ENCODE measurements at regions of chr5 and their contacts with region 1.

Region 1: DNA sequence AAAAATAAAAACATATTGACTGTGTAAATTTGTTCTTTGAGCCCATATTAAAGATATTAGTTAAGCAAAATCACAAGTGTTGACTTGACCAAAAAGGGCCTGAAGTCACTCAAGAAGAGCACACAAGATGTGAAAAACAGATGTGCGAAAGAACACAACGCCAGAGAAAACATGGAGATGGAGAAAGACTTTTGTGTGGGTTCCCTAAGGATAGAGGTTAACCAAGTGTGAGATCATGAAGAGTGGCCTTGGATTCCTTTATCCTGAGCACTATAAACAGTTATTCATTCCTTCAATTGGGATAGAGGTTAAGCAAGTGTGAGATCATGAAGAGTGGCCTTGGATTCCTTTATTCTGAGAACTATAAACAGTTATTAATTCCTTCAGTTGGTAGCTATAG is 361.8 kb downstream of the CDH18 start:
- DNase-seq: no peak
- ATAC-seq: no peak
- H3K4me3 ChIP-seq: no peak overlapping the region
- H3K27ac ChIP-seq: no peak overlapping the region
- H3K4me1 ChIP-seq: no peaks in the 10 kb centered on the region
- H3K27me3 ChIP-seq: no peaks in the 10 kb centered on the region
- CTCF ChIP-seq: no peak
- EP300 ChIP-seq: no peak
- POLR2A ChIP-seq: no peak
- RAD21 ChIP-seq: no peak

Region 2: GRCh38 chr5:19655627-19656026 is 29.4 kb after region 1 on chr5:
- CTCF ChIA-PET with region 1: no interaction called
- POLR2A ChIA-PET with region 1: interaction called, 13 read pairs
- RAD21 ChIA-PET with region 1: no interaction called
- SMC1A ChIA-PET with region 1: no interaction called
- in situ Hi-C with region 1: no loop called
- intact Hi-C with region 1: no loop called
- DNase-seq: no peak
- ATAC-seq: no peak
- H3K4me3 ChIP-seq: no peak overlapping the region
- H3K27ac ChIP-seq: no peak overlapping the region
- H3K4me1 ChIP-seq: no peaks in the 10 kb centered on the region
- H3K27me3 ChIP-seq: no peaks in the 10 kb centered on the region
- CTCF ChIP-seq: no peak
- EP300 ChIP-seq: no peak
- POLR2A ChIP-seq: no peak
- RAD21 ChIP-seq: no peak

Region 3: DNA sequence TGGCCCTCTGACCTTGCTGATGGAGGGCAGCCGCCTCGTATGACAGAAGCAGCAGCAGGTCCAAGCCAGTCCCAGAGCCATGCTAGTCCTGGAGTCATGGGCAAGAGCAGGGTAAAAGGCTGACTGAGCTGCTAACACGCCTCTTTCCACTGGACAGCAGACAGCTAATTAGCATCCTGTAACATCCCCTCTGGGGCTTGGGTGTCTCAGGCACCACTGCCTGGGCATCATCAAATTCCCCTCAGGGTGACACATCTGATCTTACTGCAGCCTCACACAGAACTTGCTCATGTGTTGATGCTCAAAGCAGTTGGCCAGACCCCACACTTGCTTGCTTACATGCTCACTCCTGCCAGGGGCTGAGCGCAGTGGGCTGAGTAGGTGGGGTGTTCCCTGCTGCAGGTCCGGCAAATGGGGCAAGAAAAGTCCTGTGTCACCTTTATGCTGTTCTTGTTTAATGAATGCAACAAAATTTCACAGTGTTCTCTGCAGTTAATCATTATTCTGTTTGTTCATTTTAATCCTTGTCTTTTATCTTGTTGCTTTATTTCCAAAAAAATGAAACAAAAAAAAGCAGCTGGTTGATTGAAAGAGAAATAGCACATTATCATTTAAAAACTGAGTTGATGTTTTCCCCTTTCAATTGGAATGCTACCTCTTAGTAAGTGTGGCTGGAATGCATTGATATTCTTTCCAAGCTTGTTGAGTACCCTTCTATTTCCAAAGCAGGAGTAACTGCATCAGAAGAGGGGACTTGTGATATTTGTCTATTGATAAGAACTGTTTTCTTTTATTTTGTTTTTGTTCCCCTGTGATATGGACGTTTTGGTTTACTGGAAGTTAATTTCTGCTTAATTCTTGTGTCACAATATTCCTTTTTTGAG is 107.6 kb after region 1 on chr5:
- CTCF ChIA-PET with region 1: no interaction called
- POLR2A ChIA-PET with region 1: no interaction called
- RAD21 ChIA-PET with region 1: no interaction called
- SMC1A ChIA-PET with region 1: no interaction called
- in situ Hi-C with region 1: no loop called
- intact Hi-C with region 1: no loop called
- DNase-seq: no peak
- ATAC-seq: no peak
- H3K4me3 ChIP-seq: no peak overlapping the region
- H3K27ac ChIP-seq: no peak overlapping the region
- H3K4me1 ChIP-seq: no peaks in the 10 kb centered on the region
- H3K27me3 ChIP-seq: no peaks in the 10 kb centered on the region
- CTCF ChIP-seq: no peak
- EP300 ChIP-seq: no peak
- POLR2A ChIP-seq: no peak
- RAD21 ChIP-seq: no peak